MCF 10A (cell line): ENCODE measurements at regions of chr7 and their contacts with region 1.

Region 1: DNA sequence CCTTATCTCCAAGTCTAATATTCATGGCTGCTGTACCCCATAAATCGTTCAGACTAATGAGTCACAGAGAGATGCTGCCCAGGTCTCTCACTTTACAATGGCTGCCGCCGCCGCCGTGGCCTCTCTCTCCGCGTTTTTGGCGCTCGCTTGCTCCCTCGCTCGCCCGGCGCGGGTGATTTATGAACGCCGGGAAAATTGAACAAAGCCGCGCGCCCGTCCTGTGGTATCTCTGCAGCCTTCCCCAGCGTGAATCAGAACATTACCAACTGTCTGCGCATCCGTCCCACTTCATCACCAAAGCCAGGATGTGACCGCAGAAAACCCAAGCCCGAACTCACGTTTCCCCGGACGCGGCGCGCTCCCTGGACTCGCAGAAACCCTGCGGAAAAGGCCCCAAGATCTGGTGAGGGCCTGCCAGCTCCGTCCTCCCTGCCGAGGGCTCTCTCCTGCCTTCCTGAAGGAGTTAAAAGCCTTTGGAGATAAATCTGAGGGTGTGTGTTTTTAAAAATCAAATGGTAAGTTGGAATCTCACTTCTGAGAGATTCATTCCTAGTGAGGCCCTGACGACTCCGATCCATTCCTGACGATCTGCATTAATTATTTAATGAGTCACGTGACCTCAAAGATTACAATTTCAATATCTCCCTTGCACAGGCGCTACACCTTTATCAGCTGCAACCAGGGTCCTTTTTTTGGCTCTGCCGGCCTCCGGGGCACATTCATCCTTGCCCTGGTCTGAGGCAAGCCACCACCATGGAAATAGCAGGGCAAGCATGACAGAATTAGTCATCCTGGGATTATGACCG is 6.3 kb downstream of the HOXA4 start:
- DNase-seq: no peak
- H3K4me3 Mint-ChIP-seq: peak overlapping the region; percentile 29
- H3K27ac Mint-ChIP-seq: no peak overlapping the region
- H3K4me1 Mint-ChIP-seq: peaks cover 20% of the 10 kb centered on the region
- H3K27me3 Mint-ChIP-seq: no peaks in the 10 kb centered on the region
- CTCF ChIP-seq: no peak

Region 2: DNA sequence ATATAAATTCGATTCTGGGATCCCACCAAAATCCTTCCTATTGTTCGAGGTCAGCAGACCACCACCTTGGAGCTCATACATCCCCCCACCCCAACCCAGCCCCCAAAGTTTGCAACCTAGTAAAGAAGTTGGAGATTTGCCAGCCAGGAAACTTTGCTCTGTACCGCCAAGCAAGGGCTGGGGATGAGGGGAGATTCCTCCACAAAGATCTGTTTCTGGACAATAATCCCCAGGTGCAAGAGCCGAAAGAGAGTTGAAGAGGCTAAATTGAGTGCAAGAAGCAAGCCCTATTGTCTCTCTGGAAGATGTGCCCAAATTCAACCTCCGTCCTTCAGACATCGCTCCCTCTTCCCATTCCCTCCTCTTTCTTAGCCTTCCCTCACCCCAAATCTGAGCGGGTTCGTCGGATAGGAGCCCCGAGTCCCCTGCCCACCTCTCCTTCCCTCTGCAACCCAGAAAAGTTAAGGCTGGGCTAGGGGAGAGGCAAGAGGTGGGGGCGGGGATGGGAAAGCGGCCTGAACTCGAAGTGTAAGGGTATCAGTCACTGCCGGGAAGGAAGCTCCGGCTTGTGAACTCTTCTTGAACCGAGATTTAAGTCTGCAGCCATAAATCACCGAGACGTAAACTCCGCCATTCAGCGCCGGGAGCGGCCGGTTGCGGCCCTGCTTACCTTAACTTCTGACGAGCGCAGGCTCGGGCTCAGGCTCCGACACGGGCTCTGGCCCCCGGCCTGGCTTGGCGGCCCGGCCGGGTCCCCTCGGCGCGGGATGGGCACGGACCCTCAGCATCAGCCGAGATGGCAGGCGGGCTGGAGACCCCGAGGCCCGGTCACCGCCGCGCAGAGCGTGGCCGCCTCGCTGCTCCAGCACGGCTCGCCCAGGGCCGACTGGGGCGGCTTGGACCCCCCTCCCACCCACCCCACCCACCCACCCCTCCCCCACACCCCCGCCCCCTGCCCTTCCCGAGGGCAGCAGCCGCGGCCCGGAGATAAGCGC is 11.0 kb before region 1 on chr7:
- CTCF ChIA-PET with region 1: interaction called, 5 read pairs
- POLR2A ChIA-PET with region 1: interaction called, 129 read pairs
- intact Hi-C with region 1: no loop called
- DNase-seq: peak; percentile 93
- H3K4me3 Mint-ChIP-seq: peak overlapping the region; percentile 80
- H3K27ac Mint-ChIP-seq: peak overlapping the region; percentile 90
- H3K4me1 Mint-ChIP-seq: peaks cover 25% of the 10 kb centered on the region
- H3K27me3 Mint-ChIP-seq: no peaks in the 10 kb centered on the region
- CTCF ChIP-seq: no peak